ENCODE measurements at regions of chr12 and their contacts with region 1.

Region 1: DNA sequence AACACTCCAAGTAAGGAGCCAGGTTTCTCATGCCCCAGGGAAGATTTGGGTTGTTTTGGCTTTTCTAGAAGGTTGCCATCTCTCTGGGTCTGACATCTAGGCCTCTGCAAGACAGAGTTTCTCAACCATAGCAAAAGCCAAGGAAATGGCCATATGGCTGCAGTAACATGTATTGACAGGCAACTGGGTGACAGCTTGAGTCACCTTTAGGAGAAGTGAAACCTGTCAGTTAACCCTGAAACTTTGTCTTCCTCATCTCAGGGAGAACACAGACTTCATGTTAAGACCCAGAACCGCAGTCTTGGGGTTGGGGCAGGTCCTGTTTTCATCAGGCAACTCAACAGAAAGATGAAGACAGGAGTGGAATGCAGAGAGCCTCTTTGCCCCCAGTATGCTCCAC is 46.0 kb upstream of the PLBD1 start:
- DNase-seq: peak; percentile 97
- H3K4me3 ChIP-seq: peak overlapping the region; percentile 59
- H3K27ac ChIP-seq: peak overlapping the region; percentile 99
- H3K4me1 ChIP-seq: peaks cover 59% of the 10 kb centered on the region
- CTCF ChIP-seq: no peak

Region 2: DNA sequence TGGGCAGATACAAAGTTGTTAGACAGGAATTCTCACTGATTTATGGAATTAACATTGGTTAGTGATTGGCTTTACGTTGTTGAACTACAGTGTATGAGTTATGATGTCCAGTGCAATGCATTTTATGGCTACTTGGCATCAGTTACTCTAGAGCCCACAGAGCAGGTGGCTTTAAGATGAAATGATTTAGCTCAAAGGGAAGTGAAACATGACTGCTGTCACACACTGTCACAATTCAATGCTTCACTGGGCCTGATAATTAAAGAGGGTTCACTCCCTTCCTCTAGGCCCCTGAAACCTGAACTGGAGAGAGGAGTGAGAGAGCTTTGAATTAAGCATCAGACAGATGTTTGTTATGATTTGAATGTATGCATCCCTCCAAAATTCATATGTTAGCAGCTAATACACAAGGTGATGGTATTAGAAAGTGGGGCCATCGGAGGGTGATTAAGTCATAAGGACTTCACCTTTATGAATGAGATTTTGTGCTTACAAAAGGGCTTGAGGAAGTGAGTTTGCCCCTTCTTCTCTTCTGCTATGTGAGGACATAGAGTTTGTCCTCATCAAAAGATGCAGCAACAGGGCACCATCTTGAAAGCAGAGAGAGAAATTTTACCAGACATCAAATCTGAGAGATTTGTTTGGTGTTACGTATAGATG is 456.5 kb before region 1 on chr12:
- CTCF ChIA-PET with region 1: no interaction called
- POLR2A ChIA-PET with region 1: no interaction called
- intact Hi-C with region 1: loop called (anchors 5 kb)
- DNase-seq: peak; percentile 99
- H3K4me3 ChIP-seq: peak overlapping the region; percentile 49
- H3K27ac ChIP-seq: peak overlapping the region; percentile 97
- H3K4me1 ChIP-seq: peaks cover 85% of the 10 kb centered on the region
- CTCF ChIP-seq: no peak

Region 3: DNA sequence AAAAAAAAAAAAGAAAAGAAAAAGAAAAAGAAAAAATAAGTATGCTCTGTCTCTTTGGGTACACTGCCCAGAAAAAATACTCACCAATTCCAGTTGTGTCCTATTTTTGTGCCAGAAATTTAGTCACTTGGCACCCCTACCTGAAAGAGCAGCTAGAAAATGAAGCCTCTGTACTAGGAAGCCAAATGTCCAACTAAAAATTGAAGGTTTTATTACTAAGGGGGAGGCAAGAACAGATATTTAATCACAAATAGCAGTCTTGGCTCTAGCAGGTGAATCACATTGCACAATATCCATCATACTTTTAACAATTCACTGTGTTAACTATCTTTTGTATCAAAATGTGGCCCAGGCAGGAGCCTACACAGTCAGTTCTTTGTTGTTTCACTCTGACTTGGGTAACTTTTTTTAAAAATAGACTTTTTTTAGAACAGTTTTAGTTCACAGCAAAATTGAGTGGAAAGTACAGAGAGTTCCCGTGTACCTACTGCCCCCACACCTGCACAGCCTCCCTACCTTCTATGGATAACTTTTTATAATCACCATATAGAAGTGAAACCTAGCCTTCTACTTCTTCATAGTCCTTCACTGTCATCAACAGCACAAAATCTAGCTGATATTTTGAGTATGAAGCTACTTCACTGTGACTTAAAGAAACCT is 335.3 kb before region 1 on chr12:
- CTCF ChIA-PET with region 1: no interaction called
- POLR2A ChIA-PET with region 1: interaction called, 10 read pairs
- intact Hi-C with region 1: loop called (anchors 2 kb)
- DNase-seq: peak; percentile 79
- H3K4me3 ChIP-seq: peak overlapping the region; percentile 5
- H3K27ac ChIP-seq: peak overlapping the region; percentile 95
- H3K4me1 ChIP-seq: peaks cover 88% of the 10 kb centered on the region
- CTCF ChIP-seq: no peak

Region 4: GRCh38 chr12:14340371-14340770 is 273.3 kb before region 1 on chr12:
- CTCF ChIA-PET with region 1: no interaction called
- POLR2A ChIA-PET with region 1: no interaction called
- intact Hi-C with region 1: no loop called
- DNase-seq: no peak
- H3K4me3 ChIP-seq: no peak overlapping the region
- H3K27ac ChIP-seq: no peak overlapping the region
- H3K4me1 ChIP-seq: no peaks in the 10 kb centered on the region
- CTCF ChIP-seq: no peak

Region 5: DNA sequence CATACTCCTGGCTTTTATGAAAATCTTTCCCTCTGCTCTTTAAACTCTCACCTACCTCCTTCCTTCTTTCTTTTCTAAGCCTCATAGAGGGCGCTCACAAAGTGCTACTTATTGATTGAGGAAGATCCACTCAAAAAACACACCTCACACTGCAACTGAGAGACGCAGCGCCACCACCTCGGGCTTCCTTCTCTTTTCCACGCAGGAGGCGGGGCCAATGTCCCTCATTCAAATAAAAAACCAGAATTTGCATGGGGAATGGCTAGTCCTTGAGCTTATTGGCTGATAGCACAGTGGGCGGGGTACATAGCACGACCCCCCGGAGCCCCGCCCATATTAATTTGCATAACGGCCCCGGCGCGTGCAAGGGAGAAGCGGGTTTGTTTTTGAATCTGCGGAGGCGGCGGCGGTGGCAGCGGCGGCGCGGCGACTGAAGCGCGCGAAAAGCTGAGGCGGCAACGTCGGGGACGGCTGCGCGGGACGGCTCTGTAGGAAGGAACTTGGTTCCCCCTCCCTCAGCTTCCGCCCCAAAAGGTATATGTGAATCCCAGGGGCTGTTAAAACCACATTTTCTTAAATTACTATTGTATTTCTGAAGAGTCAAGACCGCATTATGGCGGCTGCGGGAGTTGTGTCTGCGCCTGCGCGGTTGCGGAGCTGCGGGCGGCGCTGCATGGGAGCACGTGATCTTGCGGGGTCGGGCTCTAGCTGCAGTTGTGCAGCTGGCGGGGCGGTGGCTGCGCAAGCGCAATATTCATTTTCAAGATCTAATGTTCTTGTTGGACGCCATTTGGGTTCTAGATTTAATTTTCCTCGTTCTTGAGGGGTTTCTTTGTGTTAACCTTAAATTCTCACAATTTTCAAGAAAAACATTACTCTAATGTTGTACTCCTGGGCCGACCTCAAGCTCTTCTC is 248.2 kb before region 1 on chr12 and contains the start of gene ATF7IP:
- CTCF ChIA-PET with region 1: no interaction called
- POLR2A ChIA-PET with region 1: no interaction called
- intact Hi-C with region 1: loop called (anchors 2 kb)
- DNase-seq: peak; percentile 68
- H3K4me3 ChIP-seq: peak within 1 kb of the TSS; percentile 22
- H3K27ac ChIP-seq: peak within 1 kb of the TSS; percentile 51
- H3K4me1 ChIP-seq: peaks cover 36% of the 10 kb centered on the region
- CTCF ChIP-seq: peak; percentile 75
- total RNA-seq, gene ATF7IP: 55.6 and 69.8 TPM in 2 replicates

Region 6: GRCh38 chr12:14417715-14418114 is 196.0 kb before region 1 on chr12:
- CTCF ChIA-PET with region 1: no interaction called
- POLR2A ChIA-PET with region 1: no interaction called
- intact Hi-C with region 1: no loop called
- DNase-seq: peak; percentile 47
- H3K4me3 ChIP-seq: no peak overlapping the region
- H3K27ac ChIP-seq: no peak overlapping the region
- H3K4me1 ChIP-seq: peaks cover 9% of the 10 kb centered on the region
- CTCF ChIP-seq: no peak

Region 7: GRCh38 chr12:14577344-14577743 is 36.4 kb before region 1 on chr12:
- CTCF ChIA-PET with region 1: interaction called, 3 read pairs
- POLR2A ChIA-PET with region 1: interaction called, 23 read pairs
- intact Hi-C with region 1: loop called (anchors 1 kb)
- DNase-seq: peak; percentile 79
- H3K4me3 ChIP-seq: peak overlapping the region; percentile 41
- H3K27ac ChIP-seq: peak overlapping the region; percentile 93
- H3K4me1 ChIP-seq: peaks cover 62% of the 10 kb centered on the region
- CTCF ChIP-seq: no peak

Region 8: GRCh38 chr12:14629832-14630710 is 16.4 kb after region 1 on chr12:
- CTCF ChIA-PET with region 1: no interaction called
- POLR2A ChIA-PET with region 1: interaction called, 15 read pairs
- intact Hi-C with region 1: no loop called
- DNase-seq: peak; percentile 82
- H3K4me3 ChIP-seq: no peak overlapping the region
- H3K27ac ChIP-seq: no peak overlapping the region
- H3K4me1 ChIP-seq: peaks cover 28% of the 10 kb centered on the region
- CTCF ChIP-seq: peak; percentile 99

Measured in OCI-LY7 (cell line).